IMR-90 (cell line): ENCODE measurements at regions of chr1 and their contacts with region 1.

Region 1: GRCh38 chr1:236868625-236869467 is 73.8 kb downstream of the MTR start:
- DNase-seq: peak; percentile 77
- ATAC-seq: peak; percentile 95
- H3K4me3 ChIP-seq: no peak overlapping the region
- H3K27ac ChIP-seq: no peak overlapping the region
- H3K4me1 ChIP-seq: no peaks in the 10 kb centered on the region
- H3K27me3 ChIP-seq: no peaks in the 10 kb centered on the region
- CTCF ChIP-seq: peak; percentile 90
- POLR2A ChIP-seq: no peak
- RAD21 ChIP-seq: peak; percentile 76

Region 2: GRCh38 chr1:236103646-236104218 is 765.1 kb before region 1 on chr1:
- CTCF ChIA-PET with region 1: no interaction called
- POLR2A ChIA-PET with region 1: no interaction called
- dilution Hi-C with region 1: no loop called
- in situ Hi-C with region 1: no loop called
- intact Hi-C with region 1: loop called (anchors 1 kb)
- DNase-seq: peak; percentile 57
- ATAC-seq: peak; percentile 79
- H3K4me3 ChIP-seq: no peak overlapping the region
- H3K27ac ChIP-seq: no peak overlapping the region
- H3K4me1 ChIP-seq: peaks cover 2% of the 10 kb centered on the region; the same call in 1 of the 2 replicates
- H3K27me3 ChIP-seq: peaks cover 7% of the 10 kb centered on the region
- CTCF ChIP-seq: peak; percentile 88
- POLR2A ChIP-seq: no peak
- RAD21 ChIP-seq: peak; percentile 91

Region 3: GRCh38 chr1:236603991-236604904 is 264.6 kb before region 1 on chr1 and contains the start of gene HEATR1:
- CTCF ChIA-PET with region 1: interaction called, 4 read pairs
- POLR2A ChIA-PET with region 1: no interaction called
- dilution Hi-C with region 1: no loop called
- in situ Hi-C with region 1: no loop called
- intact Hi-C with region 1: loop called (anchors 1 kb)
- DNase-seq: peak; percentile 96
- ATAC-seq: peak; percentile 99
- H3K4me3 ChIP-seq: peak within 1 kb of the TSS; percentile 79
- H3K27ac ChIP-seq: peak within 1 kb of the TSS; percentile 80
- H3K4me1 ChIP-seq: no peaks in the 10 kb centered on the region
- H3K27me3 ChIP-seq: no peaks in the 10 kb centered on the region
- CTCF ChIP-seq: no peak
- POLR2A ChIP-seq: peak; percentile 53; the same call in 1 of the 2 replicates
- RAD21 ChIP-seq: no peak
- total RNA-seq, gene HEATR1: 53.8 and 61.1 TPM in 2 replicates

Region 4: DNA sequence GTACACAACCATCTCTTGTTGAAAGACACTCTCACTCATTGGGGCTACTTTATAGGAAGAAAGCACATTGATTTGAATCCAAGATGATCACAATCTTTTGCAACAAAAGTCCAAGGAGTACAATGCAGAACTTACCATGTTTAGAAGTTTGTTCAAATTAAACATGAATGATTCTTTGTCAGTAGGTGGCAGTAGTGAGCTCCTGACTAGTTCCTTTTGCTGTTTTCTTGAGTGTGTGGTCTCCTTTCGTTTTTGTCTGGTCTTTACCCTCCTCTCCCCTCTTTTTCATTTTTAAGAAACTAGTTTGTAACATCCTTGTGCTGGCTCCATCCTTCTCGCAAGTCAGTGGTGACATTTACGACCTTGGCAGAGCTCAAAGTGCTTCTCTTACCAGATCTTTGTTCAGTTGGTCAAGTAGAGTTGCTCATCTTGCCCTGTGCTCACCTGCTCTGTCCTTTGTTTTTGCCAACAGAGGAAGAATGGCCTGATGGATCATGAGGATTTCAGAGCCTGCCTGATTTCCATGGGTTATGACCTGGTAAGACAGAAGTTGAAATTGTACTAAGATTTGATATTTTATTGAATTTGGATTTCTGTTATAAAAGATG is 109.5 kb before region 1 on chr1:
- CTCF ChIA-PET with region 1: interaction called, 7 read pairs
- POLR2A ChIA-PET with region 1: no interaction called
- dilution Hi-C with region 1: no loop called
- in situ Hi-C with region 1: loop called (anchors 5 kb)
- intact Hi-C with region 1: loop called (anchors 1 kb)
- DNase-seq: peak; percentile 42
- ATAC-seq: peak; percentile 72
- H3K4me3 ChIP-seq: no peak overlapping the region
- H3K27ac ChIP-seq: no peak overlapping the region
- H3K4me1 ChIP-seq: no peaks in the 10 kb centered on the region
- H3K27me3 ChIP-seq: no peaks in the 10 kb centered on the region
- CTCF ChIP-seq: peak; percentile 60
- POLR2A ChIP-seq: no peak
- RAD21 ChIP-seq: peak; percentile 53

Region 5: DNA sequence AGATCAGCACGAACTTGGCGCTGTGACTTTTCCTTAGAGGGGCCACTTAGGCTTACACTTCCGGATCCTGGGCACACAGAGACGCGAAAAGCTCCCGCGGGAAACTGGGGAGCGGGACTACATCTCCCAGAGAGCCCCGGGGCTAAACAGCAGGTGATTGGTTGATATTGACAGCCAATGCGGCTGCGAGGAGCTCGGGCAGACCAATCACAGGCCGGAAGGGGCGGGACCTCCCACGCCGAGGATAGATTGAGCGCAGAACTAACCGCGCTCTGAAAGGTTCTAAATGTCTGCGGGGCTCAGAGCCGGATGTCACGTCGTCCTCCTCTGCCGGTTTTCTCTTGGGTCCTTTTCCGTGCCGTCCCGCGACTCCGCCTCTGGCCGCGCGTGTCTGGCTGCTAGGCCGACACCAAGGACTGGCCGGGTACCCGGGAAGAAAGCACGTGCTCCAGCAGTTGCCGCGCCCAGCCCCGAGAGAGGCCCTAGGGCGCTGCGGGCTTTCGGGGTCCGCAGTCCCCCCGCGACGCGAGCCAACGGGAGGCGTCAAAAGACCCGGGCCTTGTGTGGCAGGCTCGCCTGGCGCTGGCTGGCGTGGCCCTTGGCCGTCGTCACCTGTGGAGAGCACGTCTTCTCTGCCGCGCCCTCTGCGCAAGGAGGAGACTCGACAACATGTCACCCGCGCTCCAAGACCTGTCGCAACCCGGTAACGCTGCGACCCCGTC is 73.7 kb before region 1 on chr1 and contains the start of gene MTR:
- CTCF ChIA-PET with region 1: no interaction called
- POLR2A ChIA-PET with region 1: no interaction called
- dilution Hi-C with region 1: no loop called
- in situ Hi-C with region 1: no loop called
- intact Hi-C with region 1: loop called (anchors 5 kb)
- DNase-seq: peak; percentile 95
- ATAC-seq: peak; percentile 100
- H3K4me3 ChIP-seq: peak within 1 kb of the TSS; percentile 61
- H3K27ac ChIP-seq: peak within 1 kb of the TSS; percentile 65
- H3K4me1 ChIP-seq: no peaks in the 10 kb centered on the region
- H3K27me3 ChIP-seq: no peaks in the 10 kb centered on the region
- CTCF ChIP-seq: no peak
- POLR2A ChIP-seq: peak; percentile 90
- RAD21 ChIP-seq: no peak
- total RNA-seq, gene MTR: 31.0 and 32.8 TPM in 2 replicates